Activated CD8-positive, alpha-beta T cell treated with anti-CD3 and anti-CD28 coated beads for 36 hours (primary cell): ENCODE measurements at regions of chr10 and their contacts with region 1.

Region 1: DNA sequence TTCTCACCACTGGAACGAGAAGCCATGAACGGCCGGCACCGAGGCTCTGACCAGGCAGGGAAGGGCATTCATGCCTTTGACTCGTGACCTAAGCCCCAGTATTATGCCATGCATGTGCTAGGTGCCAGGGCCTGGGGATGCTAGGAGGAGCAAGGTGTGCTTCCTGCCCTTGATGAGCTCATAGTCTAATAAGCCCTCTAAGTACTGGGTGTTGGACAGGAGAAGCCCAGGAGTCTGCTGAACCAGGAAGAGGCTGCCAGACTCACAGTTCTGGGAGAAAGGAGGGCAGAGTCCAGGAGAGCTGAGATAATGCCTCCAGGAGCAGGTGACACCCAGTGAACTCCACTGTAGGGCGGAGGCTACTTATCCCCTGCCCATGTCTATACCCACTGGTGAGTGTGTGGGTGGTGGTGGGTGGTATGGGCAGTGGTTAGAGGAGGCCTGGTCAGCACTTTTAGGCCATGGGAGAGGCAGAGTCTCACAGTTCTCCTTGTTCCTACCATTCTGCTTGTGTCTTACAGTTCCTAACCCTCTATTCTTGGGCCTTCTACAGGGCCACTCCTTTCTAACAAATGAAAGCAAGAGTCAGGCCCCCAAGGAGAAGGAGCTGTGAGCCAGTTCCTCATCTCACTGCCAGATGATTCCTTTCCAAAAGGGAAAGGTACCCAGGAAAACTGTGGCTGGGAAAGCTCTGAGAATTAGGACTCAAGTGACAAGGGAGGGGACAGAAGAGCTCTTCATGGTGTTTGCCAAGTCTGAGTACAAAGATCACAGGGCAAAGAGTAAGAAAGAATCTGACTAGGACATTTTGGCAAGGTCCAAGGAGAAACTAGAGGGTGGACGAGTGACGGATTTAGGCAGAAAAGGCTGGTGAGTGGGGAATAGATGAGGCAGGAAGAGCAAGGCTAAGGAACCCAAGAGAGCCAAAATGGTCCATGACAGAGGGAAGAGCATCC is 3.6 kb upstream of the MXI1 start:
- DNase-seq: no peak
- ATAC-seq: no peak
- H3K4me3 Mint-ChIP-seq: no peak overlapping the region
- H3K27ac Mint-ChIP-seq: no peak overlapping the region
- H3K4me1 Mint-ChIP-seq: peaks cover 16% of the 10 kb centered on the region
- H3K27me3 Mint-ChIP-seq: peaks cover 31% of the 10 kb centered on the region
- CTCF ChIP-seq: no peak

Region 2: DNA sequence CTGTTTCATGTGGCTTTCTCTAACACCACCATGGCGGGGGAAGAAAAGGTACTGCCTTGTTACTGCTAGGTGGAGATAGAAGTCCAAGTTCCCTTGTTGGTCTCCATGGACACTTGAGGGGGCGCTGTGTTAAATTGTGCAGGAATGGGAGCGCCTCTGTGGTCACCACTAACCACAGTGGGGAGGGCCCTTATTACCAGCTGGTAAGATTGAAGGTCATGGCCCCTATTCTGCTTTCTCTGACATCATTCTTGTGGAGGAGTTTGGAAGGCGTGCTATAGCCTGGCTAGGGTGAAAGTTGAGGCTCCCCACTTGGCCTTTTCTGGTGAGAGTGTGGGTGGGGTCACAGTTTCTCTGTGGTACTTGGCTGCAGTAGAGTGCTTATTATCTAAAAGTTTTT is 11.2 kb before region 1 on chr10:
- CTCF ChIA-PET with region 1: interaction called, 12 read pairs
- POLR2A ChIA-PET with region 1: interaction called, 4 read pairs
- intact Hi-C with region 1: no loop called
- DNase-seq: peak; percentile 69
- ATAC-seq: peak; percentile 88
- H3K4me3 Mint-ChIP-seq: no peak overlapping the region
- H3K27ac Mint-ChIP-seq: no peak overlapping the region
- H3K4me1 Mint-ChIP-seq: peaks cover 13% of the 10 kb centered on the region
- H3K27me3 Mint-ChIP-seq: peaks cover 37% of the 10 kb centered on the region
- CTCF ChIP-seq: no peak

Region 3: GRCh38 chr10:110918643-110919363 is 715.0 kb after region 1 on chr10 and contains the start of gene BBIP1:
- CTCF ChIA-PET with region 1: no interaction called
- POLR2A ChIA-PET with region 1: no interaction called
- intact Hi-C with region 1: no loop called
- DNase-seq: no peak
- ATAC-seq: peak; percentile 94
- H3K4me3 Mint-ChIP-seq: peak within 1 kb of the TSS; percentile 87
- H3K27ac Mint-ChIP-seq: peak within 1 kb of the TSS; percentile 98
- H3K4me1 Mint-ChIP-seq: peaks cover 39% of the 10 kb centered on the region
- H3K27me3 Mint-ChIP-seq: no peaks in the 10 kb centered on the region
- CTCF ChIP-seq: no peak
- total RNA-seq, gene BBIP1: 41.2 to 44.4 TPM